ENCODE measurements at regions of chr9 and their contacts with region 1.

Region 1: DNA sequence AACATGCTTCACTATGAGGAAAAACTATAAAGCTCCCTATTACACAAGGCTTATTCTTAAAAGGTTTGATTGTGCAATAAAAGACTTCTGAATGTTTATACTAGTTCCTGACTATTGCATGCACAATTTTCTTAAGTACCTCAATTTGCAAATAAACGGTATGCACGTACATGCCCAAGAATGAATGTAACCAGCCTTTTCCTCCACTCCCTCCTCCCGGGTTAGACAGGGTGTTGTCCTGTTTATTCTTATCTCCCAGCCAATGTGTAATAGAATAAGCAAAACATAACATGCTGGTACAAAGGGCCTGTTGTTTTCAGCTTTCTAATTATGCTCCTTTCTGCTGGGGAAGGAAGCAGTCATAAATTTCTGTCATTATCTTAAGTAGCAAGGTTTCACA is 79.1 kb downstream of the AOPEP start:
- DNase-seq: peak; percentile 69 to 100
- H3K4me3 ChIP-seq: peak overlapping the region; percentile 0; the same call in 1 of the 2 replicates
- H3K27ac ChIP-seq: peak overlapping the region; percentile 94
- H3K4me1 ChIP-seq: peaks cover 54% of the 10 kb centered on the region
- H3K27me3 ChIP-seq: no peaks in the 10 kb centered on the region
- CTCF ChIP-seq: no peak

Region 2: GRCh38 chr9:94772639-94773303 is 32.8 kb before region 1 on chr9:
- CTCF ChIA-PET with region 1: no interaction called
- POLR2A ChIA-PET with region 1: interaction called, 13 read pairs
- intact Hi-C with region 1: no loop called
- DNase-seq: no peak
- H3K4me3 ChIP-seq: no peak overlapping the region
- H3K27ac ChIP-seq: no peak overlapping the region
- H3K4me1 ChIP-seq: no peaks in the 10 kb centered on the region
- H3K27me3 ChIP-seq: no peaks in the 10 kb centered on the region
- CTCF ChIP-seq: no peak

Region 3: DNA sequence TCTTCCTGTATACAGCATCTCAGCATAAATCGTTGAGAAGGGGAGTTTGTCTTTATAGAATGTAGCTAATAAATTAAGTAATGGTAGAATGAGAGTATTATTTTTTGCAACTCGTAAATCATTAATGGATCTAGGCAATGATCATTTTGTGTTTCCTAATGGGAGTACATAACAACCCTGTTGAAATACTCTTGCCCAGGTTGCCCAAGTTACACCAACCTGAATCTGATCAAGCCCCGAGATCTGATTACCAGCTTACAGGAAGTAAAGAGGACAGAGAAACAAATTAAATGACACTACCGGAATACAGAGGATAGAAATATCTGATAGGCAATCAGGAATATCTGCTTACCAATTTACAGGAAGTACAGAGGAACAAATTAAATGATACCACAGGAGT is 28.2 kb after region 1 on chr9:
- CTCF ChIA-PET with region 1: no interaction called
- POLR2A ChIA-PET with region 1: no interaction called
- intact Hi-C with region 1: no loop called
- DNase-seq: no peak
- H3K4me3 ChIP-seq: no peak overlapping the region
- H3K27ac ChIP-seq: no peak overlapping the region
- H3K4me1 ChIP-seq: no peaks in the 10 kb centered on the region
- H3K27me3 ChIP-seq: no peaks in the 10 kb centered on the region
- CTCF ChIP-seq: no peak

Region 4: DNA sequence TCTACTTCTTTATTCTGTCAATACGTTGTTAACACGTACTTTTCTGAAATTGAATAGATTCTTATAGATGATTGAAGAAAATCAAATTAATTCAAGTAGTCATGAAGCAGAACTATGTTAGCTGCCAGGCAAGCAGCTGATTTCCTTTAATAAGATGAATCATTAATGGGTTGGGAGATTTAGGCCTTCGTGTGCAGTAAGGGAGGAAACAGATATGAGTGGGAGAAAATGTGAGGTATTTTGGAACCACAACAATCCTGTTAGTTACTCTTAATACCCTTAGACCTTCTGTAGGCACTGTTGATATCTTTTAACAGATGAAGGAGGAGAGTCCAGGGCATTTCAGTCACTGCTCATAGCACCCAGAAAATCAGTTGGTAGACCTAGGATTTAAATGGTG is 41.9 kb after region 1 on chr9:
- CTCF ChIA-PET with region 1: no interaction called
- POLR2A ChIA-PET with region 1: no interaction called
- intact Hi-C with region 1: no loop called
- DNase-seq: peak in 1 of 2 experiments; percentile 57
- H3K4me3 ChIP-seq: no peak overlapping the region
- H3K27ac ChIP-seq: no peak overlapping the region
- H3K4me1 ChIP-seq: peaks cover 6% of the 10 kb centered on the region
- H3K27me3 ChIP-seq: no peaks in the 10 kb centered on the region
- CTCF ChIP-seq: no peak